CD8-positive, alpha-beta memory T cell (primary cell): ENCODE measurements at regions of chr17 and their contacts with region 1.

Region 1: GRCh38 chr17:75012346-75013091 is at the start of gene MRPL58:
- DNase-seq: peak; percentile 60 to 84 (median 76)
- H3K4me3 ChIP-seq: peak within 1 kb of the TSS; percentile 90
- H3K4me3 Mint-ChIP-seq: peak within 1 kb of the TSS; percentile 92 to 99 (median 95)
- H3K27ac ChIP-seq: peak within 1 kb of the TSS; percentile 73
- H3K27ac Mint-ChIP-seq: peak within 1 kb of the TSS; percentile 81 to 96 (median 92)
- H3K4me1 ChIP-seq: peaks cover 15% of the 10 kb centered on the region
- H3K4me1 Mint-ChIP-seq: peaks cover 28 to 44% (median 35%) of the 10 kb centered on the region in 3 donors
- H3K27me3 ChIP-seq: no peaks in the 10 kb centered on the region
- H3K27me3 Mint-ChIP-seq: no peaks in the 10 kb centered on the region
- total RNA-seq, gene MRPL58: 65.5 to 68.8 TPM

Region 2: GRCh38 chr17:74873038-74873873 is 139.3 kb before region 1 on chr17:
- CTCF ChIA-PET with region 1: no interaction called
- POLR2A ChIA-PET with region 1: no interaction called
- DNase-seq: peak; percentile 98 to 100 (median 99)
- H3K4me3 ChIP-seq: peak overlapping the region; percentile 98
- H3K4me3 Mint-ChIP-seq: peak overlapping the region; percentile 82 to 97 (median 93)
- H3K27ac ChIP-seq: peak overlapping the region; percentile 96
- H3K27ac Mint-ChIP-seq: peak overlapping the region; percentile 91 to 99 (median 97)
- H3K4me1 ChIP-seq: peaks cover 10% of the 10 kb centered on the region
- H3K4me1 Mint-ChIP-seq: peaks cover 18 to 23% (median 22%) of the 10 kb centered on the region in 3 donors
- H3K27me3 ChIP-seq: no peaks in the 10 kb centered on the region
- H3K27me3 Mint-ChIP-seq: no peaks in the 10 kb centered on the region

Region 3: DNA sequence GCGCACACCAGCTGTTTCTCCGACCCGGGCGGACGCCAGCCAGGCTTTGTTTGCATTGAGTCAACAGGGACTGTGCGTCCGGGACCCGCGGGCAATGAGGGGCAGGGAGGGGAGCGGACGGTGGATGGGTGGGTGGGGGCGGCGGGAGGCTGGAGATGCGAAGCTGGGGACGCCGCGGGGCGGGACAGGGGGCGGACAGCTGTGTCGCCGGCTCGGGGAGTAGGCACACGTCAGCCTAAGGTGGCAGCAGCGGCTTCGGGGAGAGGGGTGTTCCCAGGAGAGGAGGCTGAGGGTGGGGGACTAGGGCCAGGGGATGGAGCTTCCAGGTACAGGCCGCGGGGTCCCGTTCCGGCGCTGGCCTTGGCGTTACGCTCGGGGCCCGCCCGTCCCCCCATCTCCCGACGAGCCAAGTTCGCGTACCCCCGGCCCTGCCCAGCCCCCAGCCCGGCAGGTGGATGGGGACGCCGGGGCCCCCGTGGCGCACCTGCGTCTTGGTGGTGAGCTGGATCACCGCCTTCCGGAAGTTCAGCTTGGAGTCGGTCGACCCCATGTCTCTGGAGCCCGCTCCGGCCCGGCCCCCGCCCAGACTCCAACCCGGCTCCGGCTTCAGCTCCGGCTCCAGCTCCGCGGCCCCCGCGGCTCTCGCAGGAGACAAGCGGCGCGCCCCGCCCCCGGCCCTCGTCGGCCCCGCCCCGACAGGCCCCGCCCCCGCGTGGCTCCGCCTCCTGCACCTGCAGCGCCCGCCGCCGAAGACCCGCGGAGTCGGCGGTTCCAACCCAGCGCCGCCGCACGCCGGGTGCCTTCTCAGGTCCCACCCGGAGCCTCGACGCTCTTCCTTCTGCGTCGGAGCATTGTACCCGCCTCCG is 40.2 kb before region 1 on chr17 and contains the start of gene HID1:
- CTCF ChIA-PET with region 1: interaction called, 17 read pairs
- POLR2A ChIA-PET with region 1: interaction called, 6 read pairs
- DNase-seq: peak; percentile 69 to 87 (median 77)
- H3K4me3 ChIP-seq: peak within 1 kb of the TSS; percentile 64
- H3K4me3 Mint-ChIP-seq: peak within 1 kb of the TSS; percentile 79 to 90 (median 84)
- H3K27ac ChIP-seq: no peak within 1 kb of the TSS
- H3K27ac Mint-ChIP-seq: peak within 1 kb of the TSS in 5 of 8 donors; percentile 48 to 88 (median 68)
- H3K4me1 ChIP-seq: peaks cover 13% of the 10 kb centered on the region
- H3K4me1 Mint-ChIP-seq: peaks cover 5 to 20% (median 6%) of the 10 kb centered on the region in 3 donors
- H3K27me3 ChIP-seq: peaks cover 8% of the 10 kb centered on the region
- H3K27me3 Mint-ChIP-seq: peaks cover 4 to 22% of the 10 kb centered on the region in 2 donors
- total RNA-seq, gene HID1: 0.91 to 2.3 TPM

Region 4: GRCh38 chr17:74987418-74987908 is 25.1 kb before region 1 on chr17 and contains the start of gene CDR2L:
- CTCF ChIA-PET with region 1: interaction called, 18 read pairs
- POLR2A ChIA-PET with region 1: interaction called, 6 read pairs
- DNase-seq: peak; percentile 88 to 93 (median 92)
- H3K4me3 ChIP-seq: peak within 1 kb of the TSS; percentile 9
- H3K4me3 Mint-ChIP-seq: peak within 1 kb of the TSS; percentile 80 to 93 (median 89)
- H3K27ac ChIP-seq: peak within 1 kb of the TSS; percentile 54
- H3K27ac Mint-ChIP-seq: peak within 1 kb of the TSS in 6 of 8 donors; percentile 32 to 72 (median 44)
- H3K4me1 ChIP-seq: peaks cover 4% of the 10 kb centered on the region
- H3K4me1 Mint-ChIP-seq: peaks cover 4 to 18% (median 11%) of the 10 kb centered on the region in 3 donors
- H3K27me3 ChIP-seq: no peaks in the 10 kb centered on the region
- H3K27me3 Mint-ChIP-seq: peaks cover 0 to 3% of the 10 kb centered on the region in 2 donors
- total RNA-seq, gene CDR2L: 1.5 to 1.7 TPM

Region 5: GRCh38 chr17:75024686-75025397 is 12.3 kb after region 1 on chr17:
- CTCF ChIA-PET with region 1: interaction called, 15 read pairs
- POLR2A ChIA-PET with region 1: interaction called, 3 read pairs
- DNase-seq: peak in 2 of 5 donors; percentile 21 to 53
- H3K4me3 ChIP-seq: no peak overlapping the region
- H3K4me3 Mint-ChIP-seq: peak overlapping the region in 5 of 7 donors; percentile 29 to 71 (median 38)
- H3K27ac ChIP-seq: no peak overlapping the region
- H3K27ac Mint-ChIP-seq: peak overlapping the region; percentile 23 to 84 (median 60)
- H3K4me1 ChIP-seq: peaks cover 18% of the 10 kb centered on the region
- H3K4me1 Mint-ChIP-seq: peaks cover 9 to 29% (median 22%) of the 10 kb centered on the region in 3 donors
- H3K27me3 ChIP-seq: no peaks in the 10 kb centered on the region
- H3K27me3 Mint-ChIP-seq: peaks cover 0 to 2% of the 10 kb centered on the region in 2 donors

Region 6: DNA sequence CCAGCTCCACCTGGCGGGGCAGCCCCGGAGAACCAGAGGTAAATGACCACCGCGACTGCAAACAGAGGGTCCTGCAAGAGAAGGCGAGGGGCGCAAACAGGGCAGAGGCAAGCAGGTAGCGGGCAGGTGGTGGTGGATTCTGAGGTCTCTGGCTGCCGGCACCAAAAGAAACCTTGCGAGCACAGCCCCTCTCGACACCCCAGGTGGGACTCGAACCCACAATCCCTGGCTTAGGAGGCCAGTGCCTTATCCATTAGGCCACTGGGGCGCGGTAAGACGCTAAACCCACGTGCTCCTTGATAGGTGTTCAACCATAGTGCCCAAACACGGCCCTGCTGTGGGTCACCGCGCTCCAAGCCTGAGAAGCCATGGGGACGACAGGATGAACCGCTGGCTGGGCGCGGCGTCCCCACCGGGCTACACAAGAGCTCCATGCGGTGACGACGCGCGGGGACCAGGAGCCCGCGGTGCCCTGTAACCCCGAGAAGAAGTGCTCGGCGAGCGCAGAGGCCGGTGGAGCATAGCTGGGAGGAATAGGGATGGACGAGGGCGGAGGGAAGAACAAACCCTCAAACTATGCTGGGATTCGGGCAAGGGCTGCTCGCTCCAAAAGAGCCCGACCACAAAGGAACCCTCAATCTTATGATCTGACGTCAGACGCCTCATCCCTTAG is 21.9 kb after region 1 on chr17:
- CTCF ChIA-PET with region 1: interaction called, 17 read pairs
- POLR2A ChIA-PET with region 1: interaction called, 13 read pairs
- DNase-seq: peak; percentile 56 to 82 (median 70)
- H3K4me3 ChIP-seq: peak overlapping the region; percentile 81
- H3K4me3 Mint-ChIP-seq: peak overlapping the region; percentile 91 to 96 (median 92)
- H3K27ac ChIP-seq: peak overlapping the region; percentile 62
- H3K27ac Mint-ChIP-seq: peak overlapping the region; percentile 90 to 99 (median 97)
- H3K4me1 ChIP-seq: peaks cover 50% of the 10 kb centered on the region
- H3K4me1 Mint-ChIP-seq: peaks cover 38 to 61% (median 60%) of the 10 kb centered on the region in 3 donors
- H3K27me3 ChIP-seq: no peaks in the 10 kb centered on the region
- H3K27me3 Mint-ChIP-seq: peaks cover 0 to 16% of the 10 kb centered on the region in 2 donors